ENCODE measurements at regions of chr5 and their contacts with region 1.

Region 1: DNA sequence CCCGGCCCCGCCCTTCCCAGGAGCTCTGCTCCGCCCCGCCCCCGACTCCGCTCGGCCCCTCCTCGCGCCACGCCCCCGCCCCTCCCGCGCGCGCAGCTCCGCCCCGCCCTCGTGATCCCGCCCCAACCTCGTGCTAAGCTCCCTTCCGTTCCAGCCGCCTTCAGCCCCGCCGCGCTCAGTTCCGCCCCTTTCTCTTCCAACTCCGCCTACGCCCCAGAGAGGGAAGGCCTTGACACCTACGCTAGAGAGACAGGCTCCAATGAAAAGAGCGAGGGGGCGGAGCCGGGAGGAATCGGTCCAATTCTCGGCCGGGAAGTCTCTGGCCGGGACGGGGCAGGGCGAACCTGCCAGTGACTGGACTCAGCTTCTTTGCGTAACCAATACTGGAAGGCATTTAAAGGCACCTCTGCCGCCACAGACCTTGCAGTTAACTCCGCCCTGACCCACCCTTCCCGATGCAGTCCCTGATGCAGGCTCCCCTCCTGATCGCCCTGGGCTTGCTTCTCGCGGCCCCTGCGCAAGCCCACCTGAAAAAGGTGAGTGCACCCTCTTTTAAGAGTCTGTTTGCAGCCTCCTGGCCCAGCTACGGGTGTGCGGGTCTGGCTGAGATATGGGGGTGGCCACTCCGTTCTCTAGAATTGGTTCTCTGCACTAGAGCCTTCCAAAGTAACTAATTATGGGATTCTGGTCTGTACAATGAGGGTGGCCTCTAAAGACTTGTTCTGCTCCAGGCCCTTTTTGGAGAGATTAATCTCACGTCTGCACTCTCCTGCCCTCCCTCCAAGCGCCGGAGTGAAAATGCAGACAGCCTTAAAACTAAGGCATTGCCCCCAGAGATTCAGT is at the start of gene GM2A:
- DNase-seq: peak; percentile 97 to 98 (median 97)
- H3K4me3 ChIP-seq: peak within 1 kb of the TSS; percentile 97
- H3K4me3 Mint-ChIP-seq: peak within 1 kb of the TSS; percentile 87 to 97 (median 91)
- H3K27ac ChIP-seq: peak within 1 kb of the TSS; percentile 66
- H3K27ac Mint-ChIP-seq: peak within 1 kb of the TSS; percentile 72 to 94 (median 93)
- H3K4me1 ChIP-seq: peaks cover 30% of the 10 kb centered on the region
- H3K4me1 Mint-ChIP-seq: peaks cover 33 to 57% (median 36%) of the 10 kb centered on the region in 3 donors
- H3K27me3 ChIP-seq: no peaks in the 10 kb centered on the region
- H3K27me3 Mint-ChIP-seq: no peaks in the 10 kb centered on the region
- total RNA-seq, gene GM2A: 12.7 to 14.9 TPM

Region 2: GRCh38 chr5:151213800-151214613 is 39.0 kb before region 1 on chr5:
- CTCF ChIA-PET with region 1: interaction called, 10 read pairs
- POLR2A ChIA-PET with region 1: interaction called, 13 read pairs
- DNase-seq: peak; percentile 75 to 93 (median 83)
- H3K4me3 ChIP-seq: peak overlapping the region; percentile 85
- H3K4me3 Mint-ChIP-seq: peak overlapping the region; percentile 83 to 95 (median 93)
- H3K27ac ChIP-seq: peak overlapping the region; percentile 91
- H3K27ac Mint-ChIP-seq: peak overlapping the region; percentile 91 to 99 (median 98)
- H3K4me1 ChIP-seq: peaks cover 95% of the 10 kb centered on the region
- H3K4me1 Mint-ChIP-seq: peaks cover 82 to 95% (median 90%) of the 10 kb centered on the region in 3 donors
- H3K27me3 ChIP-seq: no peaks in the 10 kb centered on the region
- H3K27me3 Mint-ChIP-seq: peaks cover 0 to 2% of the 10 kb centered on the region in 2 donors

Region 3: DNA sequence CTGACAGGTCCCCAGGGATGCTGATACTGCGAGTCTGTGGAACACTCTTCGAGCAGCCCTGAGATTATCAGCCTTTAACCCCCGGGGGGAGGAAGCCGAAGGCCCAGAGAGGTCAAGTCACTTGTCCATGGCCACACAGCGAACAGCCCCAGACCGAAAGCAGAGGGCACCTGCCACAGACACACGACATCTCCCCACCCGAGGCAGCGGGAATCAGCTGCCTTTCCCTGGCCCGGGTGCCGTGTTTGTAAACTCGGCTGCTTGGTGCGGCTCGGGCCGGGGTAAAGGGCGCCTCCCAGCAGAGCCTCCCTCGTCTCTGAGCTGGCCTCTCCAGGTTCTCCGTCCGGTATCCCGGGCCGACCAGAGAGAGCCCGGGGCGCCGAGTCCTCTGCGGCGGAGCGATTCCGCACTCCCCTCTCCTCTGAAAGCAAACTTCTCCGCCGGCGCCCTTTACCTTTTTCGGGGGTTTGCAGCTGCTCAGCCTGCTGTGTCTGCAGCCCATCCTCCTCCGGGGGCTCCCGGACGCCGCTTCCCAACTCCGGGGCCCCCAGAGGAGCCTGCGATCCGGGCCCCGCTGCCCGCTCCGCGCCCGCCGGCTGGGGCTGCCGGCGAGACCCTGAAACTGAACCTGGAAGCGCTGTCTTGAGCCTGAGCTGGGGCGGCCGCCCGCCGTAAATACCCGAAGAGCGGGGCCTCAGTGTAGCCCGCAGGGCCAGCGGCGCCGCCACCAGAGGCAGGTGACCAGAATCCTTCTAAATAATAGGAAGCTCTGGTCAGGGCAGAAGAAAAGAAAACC is 29.3 kb before region 1 on chr5 and contains the start of gene CCDC69:
- CTCF ChIA-PET with region 1: interaction called, 16 read pairs
- POLR2A ChIA-PET with region 1: interaction called, 13 read pairs
- DNase-seq: peak; percentile 28 to 69 (median 47)
- H3K4me3 ChIP-seq: peak within 1 kb of the TSS; percentile 92
- H3K4me3 Mint-ChIP-seq: peak within 1 kb of the TSS; percentile 80 to 98 (median 89)
- H3K27ac ChIP-seq: peak within 1 kb of the TSS; percentile 86
- H3K27ac Mint-ChIP-seq: peak within 1 kb of the TSS; percentile 91 to 99 (median 96)
- H3K4me1 ChIP-seq: peaks cover 63% of the 10 kb centered on the region
- H3K4me1 Mint-ChIP-seq: peaks cover 55 to 61% (median 59%) of the 10 kb centered on the region in 3 donors
- H3K27me3 ChIP-seq: no peaks in the 10 kb centered on the region
- H3K27me3 Mint-ChIP-seq: no peaks in the 10 kb centered on the region
- total RNA-seq, gene CCDC69: 47.9 to 50.5 TPM

Measured in CD8-positive, alpha-beta memory T cell (primary cell).